Motor neuron (in vitro differentiated cells): ENCODE measurements at regions of chr6 and their contacts with region 1.

Region 1: DNA sequence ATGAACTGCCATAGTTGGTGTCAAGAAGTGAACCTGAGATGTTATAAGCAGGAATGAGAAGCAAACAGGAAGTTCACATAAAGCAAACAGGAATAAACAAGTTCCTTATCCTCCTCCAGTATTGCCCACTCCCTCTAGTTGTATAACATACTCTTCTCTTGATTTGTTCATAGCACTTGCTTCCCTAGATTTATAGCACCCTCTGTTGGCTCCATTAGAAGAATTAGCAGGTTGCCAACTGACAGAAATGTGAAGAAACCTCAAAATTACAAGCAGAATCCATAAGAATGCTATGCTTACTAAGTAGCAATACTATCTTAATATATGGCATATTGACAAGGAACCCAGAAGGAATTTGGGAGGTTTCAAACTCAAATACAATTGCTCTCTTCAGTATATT is 195.4 kb downstream of the TBX18 start:
- ATAC-seq: peak in 4 of 8 experiments; percentile 36 to 65 (median 65)
- H3K4me3 ChIP-seq: no peak overlapping the region
- H3K27ac ChIP-seq: no peak overlapping the region
- H3K4me1 ChIP-seq: no peaks in the 10 kb centered on the region

Region 2: GRCh38 chr6:84284428-84285049 is 284.4 kb before region 1 on chr6:
- in situ Hi-C with region 1: loop called in 1 of 9 experiments (anchors 25 kb)
- ATAC-seq: peak in 3 of 8 experiments; percentile 25 to 66 (median 64)
- H3K4me3 ChIP-seq: no peak overlapping the region
- H3K27ac ChIP-seq: no peak overlapping the region
- H3K4me1 ChIP-seq: no peaks in the 10 kb centered on the region

Region 3: DNA sequence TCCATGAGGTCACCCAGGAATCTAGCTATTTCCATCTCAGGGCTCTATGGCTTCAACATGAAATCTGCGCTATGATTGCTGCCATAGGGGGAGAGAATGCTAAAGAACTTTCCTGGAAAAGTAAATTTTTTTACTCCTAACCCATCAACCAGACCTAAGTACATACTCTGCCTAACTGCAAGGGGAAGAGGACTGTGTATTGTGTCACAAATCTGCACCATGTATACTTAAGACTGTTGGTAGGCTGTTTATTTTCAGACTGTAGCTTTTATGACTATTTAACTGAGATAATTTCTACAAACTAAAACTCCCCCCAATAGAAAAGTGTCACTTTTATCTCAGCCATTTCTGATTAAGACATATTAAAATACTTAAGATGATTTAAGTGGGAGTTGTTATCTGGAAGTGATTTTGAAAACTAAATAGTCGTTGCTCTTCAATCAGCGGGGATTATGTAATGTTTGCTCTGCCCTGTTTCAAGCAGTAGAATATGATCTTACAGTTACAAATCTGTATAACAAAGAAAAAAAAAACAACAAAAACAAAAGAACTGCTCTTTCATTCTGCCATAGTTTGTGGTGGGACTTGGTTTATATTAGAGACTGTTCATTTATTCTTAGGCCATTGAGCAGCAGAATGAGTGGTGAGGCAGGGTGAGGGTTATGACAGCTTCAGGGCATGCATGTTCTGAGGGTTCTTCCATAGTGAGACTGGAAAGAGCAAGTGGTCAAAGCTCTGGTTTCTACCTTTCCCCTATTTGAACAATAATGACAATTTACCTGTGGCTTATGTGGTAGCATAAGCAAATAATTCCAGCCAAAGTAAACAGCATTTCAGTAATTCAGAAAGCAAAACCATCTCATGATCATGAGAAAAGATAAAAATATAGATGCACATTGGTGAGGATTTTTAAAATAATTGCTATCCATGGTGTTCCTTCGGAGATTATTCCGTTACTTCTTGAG is 215.2 kb before region 1 on chr6:
- in situ Hi-C with region 1: no loop called
- ATAC-seq: no peak
- H3K4me3 ChIP-seq: no peak overlapping the region
- H3K27ac ChIP-seq: no peak overlapping the region
- H3K4me1 ChIP-seq: no peaks in the 10 kb centered on the region

Region 4: GRCh38 chr6:84428300-84428907 is 140.6 kb before region 1 on chr6:
- in situ Hi-C with region 1: loop called in 1 of 9 experiments (anchors 10 kb)
- ATAC-seq: peak in 4 of 8 experiments; percentile 30 to 80 (median 74)
- H3K4me3 ChIP-seq: no peak overlapping the region
- H3K27ac ChIP-seq: no peak overlapping the region
- H3K4me1 ChIP-seq: no peaks in the 10 kb centered on the region

Region 5: GRCh38 chr6:85186546-85187175 is 617.7 kb after region 1 on chr6:
- in situ Hi-C with region 1: no loop called
- ATAC-seq: peak in 2 of 8 experiments; percentile 58 to 59
- H3K4me3 ChIP-seq: no peak overlapping the region
- H3K27ac ChIP-seq: no peak overlapping the region
- H3K4me1 ChIP-seq: no peaks in the 10 kb centered on the region